Posterior vena cava (tissue), 2 donors: ENCODE measurements at regions of chr5 and their contacts with region 1.

Region 1: GRCh38 chr5:91643797-91644196 is 260.7 kb upstream of the ARRDC3 start:
- DNase-seq: no peak

Region 2: DNA sequence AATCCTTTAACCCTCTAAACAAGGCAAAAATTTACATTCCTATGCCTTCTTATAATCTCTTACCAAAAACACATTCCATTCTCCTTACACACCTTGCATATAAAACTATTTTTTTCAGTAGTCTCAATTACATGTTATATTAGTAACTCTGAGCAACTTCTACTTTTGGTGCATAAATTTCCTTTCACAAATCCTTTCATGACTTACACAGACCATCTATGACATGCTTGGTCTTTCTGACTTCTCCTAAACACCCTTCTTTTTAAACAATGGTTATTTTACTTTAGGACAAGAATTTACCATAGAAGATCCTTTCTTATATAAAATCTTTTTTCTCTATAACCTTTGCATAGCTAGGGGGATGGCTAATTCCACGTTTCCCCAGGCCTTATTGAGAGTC is 52.7 kb before region 1 on chr5:
- intact Hi-C with region 1: loop called in 1 of 2 experiments (anchors 2 kb)
- DNase-seq: no peak

Region 3: GRCh38 chr5:92064993-92065392 is 421.2 kb after region 1 on chr5:
- intact Hi-C with region 1: no loop called
- DNase-seq: no peak